Mammary epithelial cell (primary cell): ENCODE measurements at regions of chr13 and their contacts with region 1.

Region 1: DNA sequence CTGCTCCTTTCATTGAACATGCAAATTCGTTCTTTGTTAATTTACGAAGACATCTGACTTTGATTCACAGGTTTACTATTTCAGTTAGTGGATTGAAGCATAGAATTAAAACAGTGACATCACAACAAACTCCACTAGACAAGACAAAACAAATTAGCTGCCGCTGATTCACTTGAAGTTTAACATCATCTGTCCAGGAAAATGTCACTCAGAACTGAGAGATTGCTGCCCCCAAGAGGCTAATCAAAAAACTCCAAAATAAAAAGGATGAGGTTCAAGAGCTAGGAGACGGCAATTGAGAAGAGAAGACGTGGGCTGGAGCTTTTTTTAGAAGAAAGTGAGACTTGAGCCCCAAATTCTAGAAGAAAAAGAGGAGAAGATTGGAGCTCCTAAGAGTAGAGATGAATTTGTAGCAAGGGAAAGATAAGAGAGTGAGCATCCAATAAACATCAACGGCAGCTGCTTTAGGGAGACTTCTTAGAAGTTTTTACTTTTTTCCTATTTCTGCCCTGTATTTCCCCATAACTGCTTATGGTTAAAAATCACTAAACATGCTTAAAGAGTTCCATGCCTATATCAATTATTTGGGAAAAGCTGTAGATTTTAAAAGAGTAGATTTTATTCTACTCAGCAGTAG is 40.8 kb upstream of the TPP2 start:
- DNase-seq: peak; percentile 59
- H3K4me3 ChIP-seq: no peak overlapping the region
- H3K27ac ChIP-seq: no peak overlapping the region
- H3K4me1 ChIP-seq: no peaks in the 10 kb centered on the region
- H3K27me3 ChIP-seq: no peaks in the 10 kb centered on the region
- CTCF ChIP-seq: peak; percentile 38 to 57

Region 2: GRCh38 chr13:101144808-101145419 is 1411.1 kb before region 1 on chr13:
- CTCF ChIA-PET with region 1: no interaction called
- dilution Hi-C with region 1: no loop called
- in situ Hi-C with region 1: no loop called
- intact Hi-C with region 1: loop called (anchors 2 kb)
- DNase-seq: peak; percentile 30
- H3K4me3 ChIP-seq: no peak overlapping the region
- H3K27ac ChIP-seq: no peak overlapping the region
- H3K4me1 ChIP-seq: no peaks in the 10 kb centered on the region
- H3K27me3 ChIP-seq: no peaks in the 10 kb centered on the region
- CTCF ChIP-seq: peak; percentile 51 to 63

Region 3: DNA sequence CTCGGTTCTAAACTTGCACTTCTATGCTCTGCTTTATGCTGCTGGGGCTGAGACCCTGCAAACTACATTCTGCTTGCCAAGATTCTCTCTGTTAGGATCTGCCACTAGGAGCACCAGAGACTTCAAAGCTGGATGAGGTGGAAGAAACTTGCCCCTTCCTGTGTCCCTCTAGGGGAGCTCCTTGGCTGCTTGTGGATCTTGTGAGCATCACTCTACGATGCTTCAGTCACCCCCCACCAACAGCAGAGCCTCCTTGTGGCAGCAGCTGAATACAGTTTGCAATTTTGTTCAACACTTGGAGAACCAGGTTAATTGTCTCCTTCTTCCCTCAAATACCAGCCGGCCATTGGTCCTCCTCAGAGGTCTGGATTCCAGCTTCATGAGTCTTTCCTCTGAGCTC is 464.8 kb before region 1 on chr13:
- CTCF ChIA-PET with region 1: interaction called, 11 read pairs
- dilution Hi-C with region 1: no loop called
- in situ Hi-C with region 1: no loop called
- intact Hi-C with region 1: loop called (anchors 2 kb)
- DNase-seq: peak; percentile 49
- H3K4me3 ChIP-seq: no peak overlapping the region
- H3K27ac ChIP-seq: no peak overlapping the region
- H3K4me1 ChIP-seq: no peaks in the 10 kb centered on the region
- H3K27me3 ChIP-seq: no peaks in the 10 kb centered on the region
- CTCF ChIP-seq: peak; percentile 21 to 22

Region 4: GRCh38 chr13:102197193-102197592 is 358.8 kb before region 1 on chr13:
- CTCF ChIA-PET with region 1: no interaction called
- dilution Hi-C with region 1: no loop called
- in situ Hi-C with region 1: loop called in 1 of 2 experiments (anchors 10 kb)
- intact Hi-C with region 1: no loop called
- DNase-seq: peak; percentile 30
- H3K4me3 ChIP-seq: no peak overlapping the region
- H3K27ac ChIP-seq: no peak overlapping the region
- H3K4me1 ChIP-seq: peaks cover 43% of the 10 kb centered on the region
- H3K27me3 ChIP-seq: no peaks in the 10 kb centered on the region
- CTCF ChIP-seq: peak; percentile 48 to 65

Region 5: GRCh38 chr13:102460801-102461200 is 95.2 kb before region 1 on chr13:
- CTCF ChIA-PET with region 1: no interaction called
- dilution Hi-C with region 1: no loop called
- in situ Hi-C with region 1: no loop called
- intact Hi-C with region 1: loop called (anchors 1 kb)
- DNase-seq: no peak
- H3K4me3 ChIP-seq: no peak overlapping the region
- H3K27ac ChIP-seq: no peak overlapping the region
- H3K4me1 ChIP-seq: no peaks in the 10 kb centered on the region
- H3K27me3 ChIP-seq: no peaks in the 10 kb centered on the region
- CTCF ChIP-seq: no peak